Psoas muscle (tissue), 8 donors: ENCODE measurements at regions of chr5 and their contacts with region 1.

Region 1: DNA sequence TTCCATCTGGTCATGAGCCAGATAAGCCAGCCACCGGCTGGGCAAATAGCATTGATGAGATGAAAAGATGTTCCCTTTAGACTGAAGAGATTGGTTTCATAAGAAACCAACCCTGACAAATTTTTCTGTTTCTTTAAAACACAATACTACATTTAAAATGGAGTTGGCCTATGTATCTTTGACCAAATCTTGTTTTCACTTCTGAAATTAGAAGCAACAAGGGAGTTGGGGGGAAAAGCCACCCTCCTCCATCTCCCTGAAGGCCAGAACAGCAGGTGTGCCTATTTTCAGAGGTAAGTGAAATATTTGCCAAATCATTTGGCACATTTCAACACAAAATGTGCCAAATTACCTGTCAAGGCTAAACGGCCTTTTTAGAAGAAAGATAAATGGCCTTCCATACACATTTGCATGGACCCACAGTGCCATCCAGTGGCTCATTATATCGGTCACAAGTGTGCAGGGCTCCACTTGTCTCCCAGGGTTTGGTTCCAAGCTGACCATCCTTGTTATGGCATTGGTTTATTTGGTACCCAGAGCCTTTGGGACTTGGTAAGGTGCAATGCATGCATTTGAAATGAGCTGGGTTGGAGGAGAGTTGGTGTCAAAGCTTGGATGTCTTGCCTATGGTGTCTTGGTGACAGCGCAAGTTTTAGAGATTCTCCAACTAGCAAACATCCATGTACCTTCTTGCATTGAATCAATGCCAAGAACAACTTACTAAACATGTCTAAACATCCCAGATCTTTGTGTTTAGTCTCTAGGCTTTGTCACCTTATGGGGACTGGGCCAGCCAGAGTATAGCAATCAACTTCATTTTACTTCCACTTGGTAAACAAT is 372.0 kb upstream of the KIF2A start:
- DNase-seq: no peak
- ATAC-seq: no peak
- H3K4me3 ChIP-seq: no peak overlapping the region
- H3K27ac ChIP-seq: no peak overlapping the region
- H3K4me1 ChIP-seq: no peaks in the 10 kb centered on the region
- H3K27me3 ChIP-seq: no peaks in the 10 kb centered on the region
- CTCF ChIP-seq: peak; percentile 48

Region 2: DNA sequence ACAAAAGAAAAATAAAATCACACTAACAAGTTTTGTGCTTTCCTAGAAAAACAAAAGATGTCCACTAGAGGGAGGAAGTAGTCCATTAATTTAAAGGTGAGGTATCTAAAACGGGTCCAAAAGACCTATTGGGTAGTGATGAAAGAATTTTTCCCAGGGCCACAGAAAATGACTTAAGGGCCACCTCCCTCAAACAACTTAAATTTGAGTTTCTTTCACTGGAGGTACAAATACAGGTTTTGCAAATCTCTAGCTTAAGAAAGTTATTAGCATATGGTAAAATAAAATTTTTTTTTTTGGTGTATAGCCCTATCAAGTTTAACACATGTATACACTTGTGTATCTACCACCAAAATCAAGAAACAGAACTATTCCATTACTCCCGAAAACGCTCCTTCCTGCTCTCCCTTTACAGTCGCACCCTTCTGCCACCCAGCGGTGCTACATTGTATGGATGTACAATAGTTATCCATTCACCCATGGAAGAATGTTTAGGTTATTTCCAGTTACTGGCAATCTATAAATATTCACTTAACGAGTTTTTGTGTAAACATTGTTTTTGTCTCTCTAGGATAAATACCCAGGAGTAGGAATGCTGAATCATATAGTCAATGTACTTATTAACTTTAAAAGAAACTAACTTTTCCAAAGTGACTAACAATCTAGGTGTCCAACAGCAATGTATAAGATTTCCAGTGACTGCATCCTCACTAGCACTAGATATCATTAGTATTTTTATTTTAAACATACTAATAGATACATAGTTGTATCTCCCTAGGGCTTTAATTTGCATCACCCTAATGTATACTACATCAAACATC is 1256.0 kb before region 1 on chr5:
- intact Hi-C with region 1: loop called in 1 of 2 experiments (anchors 10 kb)
- DNase-seq: no peak
- ATAC-seq: no peak
- H3K4me3 ChIP-seq: no peak overlapping the region
- H3K27ac ChIP-seq: no peak overlapping the region
- H3K4me1 ChIP-seq: no peaks in the 10 kb centered on the region
- H3K27me3 ChIP-seq: peaks cover 0 to 1% (median 0%) of the 10 kb centered on the region in 3 donors
- CTCF ChIP-seq: peak; percentile 46

Region 3: DNA sequence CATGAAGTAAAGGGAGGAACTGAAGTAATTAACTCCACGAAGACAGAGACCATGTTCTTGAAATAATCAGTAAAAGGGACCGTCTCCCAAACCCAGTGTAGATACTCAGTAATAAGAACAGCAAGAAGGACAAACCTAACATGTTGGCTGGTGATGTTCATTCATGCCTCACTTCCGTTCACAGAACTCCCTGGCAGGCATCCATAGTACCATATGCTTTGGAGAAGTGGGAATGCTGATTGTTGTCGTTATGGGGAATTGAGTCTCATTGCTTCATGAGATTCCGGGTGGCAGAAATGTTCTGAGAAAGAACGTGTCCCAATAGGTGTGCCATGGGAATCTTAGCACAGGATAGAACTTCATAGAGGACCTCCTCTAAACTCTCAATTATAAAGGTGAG is 149.7 kb before region 1 on chr5:
- intact Hi-C with region 1: no loop called
- DNase-seq: no peak
- ATAC-seq: no peak
- H3K4me3 ChIP-seq: no peak overlapping the region
- H3K27ac ChIP-seq: no peak overlapping the region
- H3K4me1 ChIP-seq: no peaks in the 10 kb centered on the region
- H3K27me3 ChIP-seq: peaks cover 0 to 1% (median 0%) of the 10 kb centered on the region in 3 donors
- CTCF ChIP-seq: no peak

Region 4: GRCh38 chr5:61901997-61902396 is 32.0 kb before region 1 on chr5:
- intact Hi-C with region 1: no loop called
- DNase-seq: no peak
- ATAC-seq: no peak
- H3K4me3 ChIP-seq: no peak overlapping the region
- H3K27ac ChIP-seq: no peak overlapping the region
- H3K4me1 ChIP-seq: no peaks in the 10 kb centered on the region
- H3K27me3 ChIP-seq: no peaks in the 10 kb centered on the region
- CTCF ChIP-seq: no peak